Astrocyte of the cerebellum (primary cell): ENCODE measurements at regions of chr3 and their contacts with region 1.

Region 1: GRCh38 chr3:186162221-186162620 is 53.3 kb upstream of the ETV5 start:
- DNase-seq: no peak
- H3K4me3 ChIP-seq: no peak overlapping the region
- CTCF ChIP-seq: no peak

Region 2: GRCh38 chr3:186108941-186109865 is 53.0 kb before region 1 on chr3 and contains the start of gene ETV5:
- in situ Hi-C with region 1: no loop called
- DNase-seq: peak; percentile 99
- H3K4me3 ChIP-seq: peak within 1 kb of the TSS; percentile 85
- CTCF ChIP-seq: no peak

Region 3: GRCh38 chr3:186225603-186226002 is 63.4 kb after region 1 on chr3:
- in situ Hi-C with region 1: loop called (anchors 5 kb)
- DNase-seq: no peak
- H3K4me3 ChIP-seq: no peak overlapping the region
- CTCF ChIP-seq: no peak